Activated naive CD4-positive, alpha-beta T cell treated with anti-CD3 and anti-CD28 coated beads for 36 hours (primary cell): ENCODE measurements at regions of chr11 and their contacts with region 1.

Region 1: GRCh38 chr11:119168471-119169281 is at the start of gene NLRX1:
- DNase-seq: peak; percentile 92
- H3K4me3 Mint-ChIP-seq: peak within 1 kb of the TSS; percentile 92
- H3K27ac Mint-ChIP-seq: peak within 1 kb of the TSS; percentile 82
- H3K4me1 Mint-ChIP-seq: peaks cover 6% of the 10 kb centered on the region
- H3K27me3 Mint-ChIP-seq: no peaks in the 10 kb centered on the region
- total RNA-seq, gene NLRX1: 20.8 to 22.2 TPM

Region 2: DNA sequence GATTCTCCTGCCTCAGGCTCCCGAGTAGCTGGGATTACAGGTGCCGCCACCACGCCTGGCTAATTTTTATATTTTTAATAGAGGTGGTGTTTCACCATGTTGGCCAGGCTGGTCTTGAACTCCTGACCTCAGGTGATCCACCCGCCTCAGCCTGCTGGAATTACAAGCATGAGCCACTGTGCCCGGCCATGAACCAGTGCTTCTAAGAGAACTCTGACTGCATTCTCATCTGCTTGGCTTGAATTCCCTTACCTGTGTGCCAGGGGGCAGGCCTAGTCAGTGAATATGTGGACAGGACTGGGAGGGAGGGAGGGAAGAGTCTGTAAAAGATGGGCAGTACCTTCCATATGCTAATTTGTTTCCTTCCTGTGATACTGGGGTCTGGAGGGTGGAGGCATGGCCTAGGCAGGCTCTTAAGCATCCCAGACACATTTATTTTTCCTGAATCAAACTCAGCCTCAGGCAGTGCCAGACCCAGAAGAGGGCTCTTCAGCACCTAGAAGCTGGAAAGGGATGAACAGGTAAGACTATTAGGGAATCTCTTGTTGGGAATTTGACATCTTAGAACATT is 157.1 kb before region 1 on chr11:
- CTCF ChIA-PET with region 1: no interaction called
- intact Hi-C with region 1: no loop called
- DNase-seq: no peak
- H3K4me3 Mint-ChIP-seq: no peak overlapping the region
- H3K27ac Mint-ChIP-seq: peak overlapping the region; percentile 38
- H3K4me1 Mint-ChIP-seq: peaks cover 33% of the 10 kb centered on the region
- H3K27me3 Mint-ChIP-seq: no peaks in the 10 kb centered on the region

Region 3: DNA sequence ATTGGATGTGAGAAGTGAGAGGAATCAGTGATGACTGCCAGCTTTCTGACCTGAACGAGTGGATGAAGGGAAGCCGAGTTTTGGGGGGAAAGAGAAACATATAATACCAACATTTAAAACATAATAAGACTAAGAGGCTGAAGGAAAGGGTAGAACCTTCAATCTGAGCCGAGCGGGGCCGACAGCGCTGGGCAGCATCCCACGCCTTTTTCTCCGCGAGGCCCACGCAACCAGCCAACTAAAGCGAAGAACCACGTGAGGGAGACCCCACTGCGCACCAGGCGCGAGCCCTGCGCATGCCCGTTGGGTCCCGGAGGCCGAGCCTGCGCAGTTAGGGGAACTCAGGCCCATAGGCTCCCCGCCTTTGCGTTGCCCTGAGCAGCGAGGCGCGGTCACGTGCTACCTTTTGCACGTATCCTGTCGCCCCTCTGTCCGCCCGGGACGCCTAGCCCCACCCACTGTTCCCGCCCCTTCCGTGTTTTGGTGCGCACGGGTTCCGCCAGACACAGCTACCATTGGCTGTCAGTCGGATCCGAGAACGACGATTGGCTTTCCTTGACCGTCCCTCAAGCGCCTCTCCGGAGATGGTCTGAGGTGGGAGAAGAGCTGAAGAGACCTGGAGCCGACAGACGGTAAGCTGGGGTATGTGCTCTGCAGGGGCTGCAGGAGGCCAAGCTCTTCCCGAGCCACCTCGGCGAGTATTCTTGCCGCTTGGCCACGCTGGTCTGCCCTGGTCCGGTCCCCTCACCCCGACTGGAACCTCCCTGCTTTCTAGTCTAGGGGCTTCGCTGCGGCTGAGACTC is 47.5 kb before region 1 on chr11 and contains the start of gene HINFP:
- CTCF ChIA-PET with region 1: interaction called, 4 read pairs
- intact Hi-C with region 1: loop called (anchors 1 kb)
- DNase-seq: peak; percentile 100
- H3K4me3 Mint-ChIP-seq: peak within 1 kb of the TSS; percentile 97
- H3K27ac Mint-ChIP-seq: peak within 1 kb of the TSS; percentile 80
- H3K4me1 Mint-ChIP-seq: peaks cover 27% of the 10 kb centered on the region
- H3K27me3 Mint-ChIP-seq: no peaks in the 10 kb centered on the region
- total RNA-seq, gene HINFP: 24.5 to 25.2 TPM

Region 4: DNA sequence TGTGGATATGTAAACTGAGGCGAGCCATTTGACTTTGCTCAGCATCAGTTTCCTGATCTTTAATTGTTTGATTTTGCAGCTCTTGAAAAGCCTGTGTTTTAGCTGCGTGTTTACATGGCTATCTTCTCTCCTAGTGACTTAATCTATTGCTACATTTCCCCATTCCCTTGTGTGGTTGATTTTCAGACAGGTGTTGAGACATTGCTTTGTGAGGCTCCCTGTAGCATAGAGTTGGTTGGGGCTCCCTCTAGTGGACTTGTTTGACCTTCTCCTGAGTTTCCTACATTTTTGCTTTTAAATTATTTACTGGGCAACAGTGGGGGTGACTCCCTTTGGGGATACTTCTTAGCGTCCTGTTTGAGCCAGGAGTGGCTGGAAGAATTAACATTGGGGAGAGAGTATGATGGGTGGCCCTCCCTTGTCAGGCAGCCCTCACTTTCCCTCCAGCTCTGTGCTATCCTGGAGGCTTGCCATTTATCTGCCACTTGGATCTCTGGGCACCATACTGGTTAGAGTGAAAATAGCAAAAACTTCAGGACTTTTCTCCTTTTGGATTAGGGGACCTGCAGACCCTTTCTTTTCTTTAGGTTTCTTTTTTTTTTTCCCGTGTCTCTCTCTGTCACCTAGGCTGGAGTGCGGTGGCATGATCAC is 28.3 kb after region 1 on chr11:
- CTCF ChIA-PET with region 1: interaction called, 47 read pairs
- intact Hi-C with region 1: loop called (anchors 1 kb)
- DNase-seq: peak; percentile 88
- H3K4me3 Mint-ChIP-seq: no peak overlapping the region
- H3K27ac Mint-ChIP-seq: no peak overlapping the region
- H3K4me1 Mint-ChIP-seq: no peaks in the 10 kb centered on the region
- H3K27me3 Mint-ChIP-seq: no peaks in the 10 kb centered on the region